PC-9 (cell line): ENCODE measurements at regions of chr20 and their contacts with region 1.

Region 1: GRCh38 chr20:50421356-50422277 is 88.6 kb upstream of the PTPN1 start:
- DNase-seq: no peak
- H3K4me3 ChIP-seq: no peak overlapping the region
- H3K27ac ChIP-seq: peak overlapping the region; percentile 85
- H3K4me1 ChIP-seq: peaks cover 45% of the 10 kb centered on the region
- H3K27me3 ChIP-seq: no peaks in the 10 kb centered on the region
- CTCF ChIP-seq: no peak

Region 2: GRCh38 chr20:50360029-50360672 is 61.5 kb before region 1 on chr20:
- CTCF ChIA-PET with region 1: no interaction called
- POLR2A ChIA-PET with region 1: no interaction called
- intact Hi-C with region 1: loop called (anchors 2 kb)
- DNase-seq: peak; percentile 73 to 86
- H3K4me3 ChIP-seq: no peak overlapping the region
- H3K27ac ChIP-seq: no peak overlapping the region
- H3K4me1 ChIP-seq: peaks cover 30% of the 10 kb centered on the region
- H3K27me3 ChIP-seq: no peaks in the 10 kb centered on the region
- CTCF ChIP-seq: no peak

Region 3: GRCh38 chr20:50372776-50373167 is 48.8 kb before region 1 on chr20:
- CTCF ChIA-PET with region 1: no interaction called
- POLR2A ChIA-PET with region 1: no interaction called
- intact Hi-C with region 1: loop called (anchors 1 kb)
- DNase-seq: peak; percentile 68 to 71
- H3K4me3 ChIP-seq: no peak overlapping the region
- H3K27ac ChIP-seq: peak overlapping the region; percentile 21
- H3K4me1 ChIP-seq: peaks cover 60% of the 10 kb centered on the region
- H3K27me3 ChIP-seq: no peaks in the 10 kb centered on the region
- CTCF ChIP-seq: no peak

Region 4: DNA sequence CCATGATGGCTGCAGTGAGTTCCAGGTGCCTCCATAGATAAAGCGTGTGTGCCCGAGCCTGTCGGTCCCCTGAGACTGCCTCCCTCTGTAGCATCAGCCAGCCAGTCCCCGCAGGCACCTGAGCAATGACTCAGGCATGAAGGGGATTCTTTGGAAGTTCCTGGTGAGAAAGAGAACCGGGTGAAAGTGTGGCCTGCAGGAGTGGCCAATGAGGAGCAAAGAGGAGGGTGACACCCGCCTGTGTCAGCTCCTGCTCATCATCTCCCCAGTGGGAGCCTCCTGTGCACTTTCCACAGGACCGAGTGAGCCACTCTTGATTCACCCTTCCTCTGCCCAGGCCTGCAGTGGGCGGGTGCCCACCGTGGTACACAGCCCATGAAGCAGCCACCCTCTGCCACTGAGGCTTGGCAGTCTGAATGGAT is 17.4 kb after region 1 on chr20:
- CTCF ChIA-PET with region 1: no interaction called
- POLR2A ChIA-PET with region 1: interaction called, 4 read pairs
- intact Hi-C with region 1: loop called (anchors 1 kb)
- DNase-seq: peak; percentile 90 to 98
- H3K4me3 ChIP-seq: no peak overlapping the region
- H3K27ac ChIP-seq: peak overlapping the region; percentile 93
- H3K4me1 ChIP-seq: peaks cover 56% of the 10 kb centered on the region
- H3K27me3 ChIP-seq: no peaks in the 10 kb centered on the region
- CTCF ChIP-seq: no peak